ENCODE measurements at regions of chr3 and their contacts with region 1.

Region 1: DNA sequence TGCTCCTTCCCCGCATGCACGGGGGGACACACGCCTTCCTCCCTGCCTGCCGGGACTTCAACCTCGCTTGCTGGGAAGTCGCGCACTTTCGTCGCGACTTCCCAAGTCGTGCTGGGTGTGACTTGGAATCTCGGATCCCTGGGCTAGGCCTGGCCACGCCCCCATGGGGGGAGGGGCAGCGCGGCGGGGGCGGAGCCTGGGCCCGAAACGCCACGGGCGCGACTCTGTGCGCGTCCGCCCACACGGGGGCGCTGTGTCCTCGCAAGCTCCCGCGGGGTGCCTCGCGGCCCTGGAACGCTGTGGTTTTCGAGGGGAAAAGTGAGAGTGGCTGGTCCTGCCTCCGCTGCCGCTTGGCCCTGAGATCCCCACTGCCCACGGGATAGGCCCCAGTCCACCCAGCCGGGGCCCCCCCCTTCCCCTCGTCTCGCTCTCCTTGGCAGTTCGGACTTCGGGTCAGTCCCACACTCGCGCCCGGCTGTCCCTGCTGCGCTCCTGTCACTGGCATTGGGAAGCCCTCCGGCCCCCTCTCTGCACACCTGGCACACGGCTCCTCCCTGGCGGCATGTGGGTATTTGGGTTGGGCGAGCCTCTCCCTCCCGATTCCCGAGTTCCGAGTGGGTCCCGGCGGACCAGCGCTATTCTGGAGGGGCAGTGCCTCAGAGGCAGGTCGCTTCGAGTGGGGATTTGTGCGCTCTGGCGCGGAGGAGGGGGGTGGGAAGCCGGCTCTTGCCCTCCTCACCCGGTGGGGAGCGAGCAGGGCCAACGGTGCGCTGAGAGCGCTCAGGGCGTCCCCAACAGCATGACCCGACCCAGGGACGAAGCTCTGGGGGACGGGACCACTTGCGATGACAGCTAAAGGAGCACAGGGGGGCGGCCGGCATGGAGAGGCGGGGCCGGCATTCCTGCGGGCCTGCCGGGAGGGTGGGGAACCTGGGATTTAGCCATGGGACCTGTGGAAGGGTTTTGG is 23.6 kb downstream of the SEC61A1 start:
- DNase-seq: peak; percentile 89 to 94
- ATAC-seq: peak; percentile 91 to 94 (median 92)
- H3K4me3 ChIP-seq: peak overlapping the region; percentile 70
- H3K27ac ChIP-seq: peak overlapping the region; percentile 41
- H3K4me1 ChIP-seq: peaks cover 9% of the 10 kb centered on the region
- H3K27me3 ChIP-seq: no peaks in the 10 kb centered on the region
- CTCF ChIP-seq: peak; percentile 95

Region 2: GRCh38 chr3:127984241-127984975 is 91.4 kb before region 1 on chr3:
- intact Hi-C with region 1: no loop called
- DNase-seq: no peak
- ATAC-seq: no peak
- H3K4me3 ChIP-seq: no peak overlapping the region
- H3K27ac ChIP-seq: no peak overlapping the region
- H3K4me1 ChIP-seq: no peaks in the 10 kb centered on the region
- H3K27me3 ChIP-seq: no peaks in the 10 kb centered on the region
- CTCF ChIP-seq: no peak

Region 3: GRCh38 chr3:128123538-128124368 is 48.0 kb after region 1 on chr3 and contains the start of gene RUVBL1:
- intact Hi-C with region 1: loop called in 1 of 2 experiments (anchors 5 kb)
- DNase-seq: peak; percentile 98 to 99
- ATAC-seq: peak; percentile 99 to 100 (median 100)
- H3K4me3 ChIP-seq: peak within 1 kb of the TSS; percentile 89
- H3K27ac ChIP-seq: peak within 1 kb of the TSS; percentile 73
- H3K4me1 ChIP-seq: peaks cover 13% of the 10 kb centered on the region
- H3K27me3 ChIP-seq: no peaks in the 10 kb centered on the region
- CTCF ChIP-seq: no peak
- total RNA-seq, gene RUVBL1: 12.9 to 21.0 (median 15.4) TPM

Measured in psoas muscle (tissue), 8 donors.